A549 (cell line): ENCODE measurements at regions of chr11 and their contacts with region 1.

Region 1: DNA sequence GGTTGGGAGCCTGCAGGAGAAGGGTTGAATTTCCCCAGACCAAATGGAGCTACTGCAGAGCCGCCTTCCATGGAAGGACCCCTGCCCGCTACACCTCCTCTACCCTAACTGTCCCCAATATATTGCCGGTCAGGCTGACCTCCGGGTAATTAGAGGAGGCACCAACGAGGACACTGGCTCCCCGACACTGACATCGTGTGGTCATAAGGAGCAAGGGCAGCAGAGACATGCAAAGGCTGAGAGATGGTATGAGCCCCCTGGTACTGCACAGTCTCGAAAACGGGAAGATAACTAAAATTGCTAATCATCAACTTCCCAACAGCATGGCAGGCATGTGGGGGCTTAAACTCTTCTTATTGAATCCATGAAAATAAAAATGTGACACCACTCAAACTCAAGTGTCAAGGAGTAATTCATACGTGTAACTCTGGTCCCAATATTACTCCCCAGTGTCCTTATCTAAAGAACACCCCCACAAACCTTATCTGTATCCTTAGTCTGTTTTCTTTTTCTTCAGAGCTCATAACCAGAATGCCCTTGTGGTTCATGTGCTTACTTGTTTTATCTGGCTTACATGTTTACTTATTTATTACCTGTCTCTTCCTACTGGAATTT is 4.4 kb downstream of the CAVIN3 start:
- DNase-seq: peak; percentile 58 to 82
- ATAC-seq: peak; percentile 62 to 75
- H3K4me3 ChIP-seq: no peak overlapping the region
- H3K27ac ChIP-seq: no peak overlapping the region
- H3K4me1 ChIP-seq: peaks cover 5% of the 10 kb centered on the region; the same call in 2 of the 3 replicates
- CTCF ChIP-seq: peak; percentile 65
- EP300 ChIP-seq: no peak
- POLR2A ChIP-seq: no peak
- RAD21 ChIP-seq: peak; percentile 69 to 74

Region 2: GRCh38 chr11:6002202-6002699 is 313.7 kb before region 1 on chr11:
- CTCF ChIA-PET with region 1: no interaction called
- POLR2A ChIA-PET with region 1: no interaction called
- DNase-seq: no peak
- ATAC-seq: no peak
- H3K4me3 ChIP-seq: no peak overlapping the region
- H3K27ac ChIP-seq: no peak overlapping the region
- H3K4me1 ChIP-seq: no peaks in the 10 kb centered on the region
- CTCF ChIP-seq: no peak
- EP300 ChIP-seq: no peak
- POLR2A ChIP-seq: no peak
- RAD21 ChIP-seq: no peak

Region 3: GRCh38 chr11:6234387-6235107 is 81.4 kb before region 1 on chr11 and contains the start of gene FHIP1B:
- CTCF ChIA-PET with region 1: interaction called, 3 read pairs
- POLR2A ChIA-PET with region 1: interaction called, 12 read pairs
- DNase-seq: peak; percentile 86 to 99
- ATAC-seq: peak; percentile 92 to 95
- H3K4me3 ChIP-seq: peak within 1 kb of the TSS; percentile 90
- H3K27ac ChIP-seq: peak within 1 kb of the TSS; percentile 89
- H3K4me1 ChIP-seq: peaks cover 11% of the 10 kb centered on the region; the same call in 2 of the 3 replicates
- CTCF ChIP-seq: no peak
- EP300 ChIP-seq: no peak
- POLR2A ChIP-seq: peak; percentile 80
- RAD21 ChIP-seq: no peak
- polyA plus RNA-seq, gene FHIP1B: 19.4 and 23.9 TPM in 2 replicates

Region 4: GRCh38 chr11:6298605-6299004 is 17.3 kb before region 1 on chr11:
- CTCF ChIA-PET with region 1: interaction called, 31 read pairs
- POLR2A ChIA-PET with region 1: no interaction called
- DNase-seq: peak; percentile 50 to 72
- ATAC-seq: peak; percentile 99 to 100
- H3K4me3 ChIP-seq: no peak overlapping the region
- H3K27ac ChIP-seq: no peak overlapping the region
- H3K4me1 ChIP-seq: no peaks in the 10 kb centered on the region
- CTCF ChIP-seq: peak; percentile 50
- EP300 ChIP-seq: no peak
- POLR2A ChIP-seq: no peak
- RAD21 ChIP-seq: peak; percentile 32 to 37; a peak in 4 of 5 replicates